ENCODE measurements at regions of chr2 and their contacts with region 1.

Region 1: DNA sequence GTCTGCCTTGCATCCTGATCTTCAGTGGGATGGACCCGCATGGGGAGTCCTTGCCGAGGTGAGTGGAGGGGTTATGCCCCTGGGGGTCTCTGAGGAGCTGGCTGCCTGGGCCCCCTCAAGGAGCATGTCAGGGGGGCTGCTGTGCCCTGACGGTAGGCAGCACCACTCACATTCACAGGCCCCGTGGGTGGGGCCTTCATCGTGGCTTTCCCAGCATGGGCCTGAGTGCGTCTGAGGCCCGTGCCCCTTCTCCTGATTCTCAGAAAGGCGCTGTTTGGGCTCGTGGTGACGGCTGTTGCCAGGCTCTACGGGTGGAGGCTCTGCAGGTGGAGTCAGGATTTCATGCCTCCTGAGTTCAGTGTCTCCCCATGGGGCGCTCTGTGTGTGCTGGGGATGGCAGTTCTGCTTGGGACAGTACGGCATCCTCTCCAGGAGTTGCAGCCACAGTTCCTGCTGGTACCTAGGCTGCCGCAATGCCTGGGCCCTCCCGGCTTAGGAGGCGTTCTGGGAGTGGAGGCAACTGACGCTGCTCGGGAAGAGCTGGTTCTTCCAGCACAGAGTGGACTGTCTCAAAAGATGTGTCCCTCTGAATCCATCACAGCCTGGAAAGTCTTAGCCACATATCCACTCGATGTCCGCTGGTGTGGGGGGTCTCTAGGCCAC is 57.3 kb downstream of the NTSR2 start:
- DNase-seq: no peak
- H3K4me3 ChIP-seq: no peak overlapping the region
- H3K27ac ChIP-seq: no peak overlapping the region
- H3K4me1 ChIP-seq: no peaks in the 10 kb centered on the region
- H3K27me3 ChIP-seq: no peaks in the 10 kb centered on the region
- CTCF ChIP-seq: no peak

Region 2: GRCh38 chr2:11675423-11676112 is 62.9 kb after region 1 on chr2:
- CTCF ChIA-PET with region 1: no interaction called
- POLR2A ChIA-PET with region 1: no interaction called
- intact Hi-C with region 1: loop called (anchors 2 kb)
- DNase-seq: no peak
- H3K4me3 ChIP-seq: no peak overlapping the region
- H3K27ac ChIP-seq: no peak overlapping the region
- H3K4me1 ChIP-seq: no peaks in the 10 kb centered on the region
- H3K27me3 ChIP-seq: peaks cover 41% of the 10 kb centered on the region
- CTCF ChIP-seq: no peak